PC-3 (cell line): ENCODE measurements at regions of chr5 and their contacts with region 1.

Region 1: GRCh38 chr5:127313847-127314473 is 23.4 kb downstream of the MEGF10 start:
- DNase-seq: peak; percentile 71
- ATAC-seq: peak; percentile 80
- H3K4me3 ChIP-seq: no peak overlapping the region
- H3K27ac ChIP-seq: no peak overlapping the region
- H3K4me1 ChIP-seq: no peaks in the 10 kb centered on the region
- H3K27me3 ChIP-seq: peaks cover 51% of the 10 kb centered on the region
- CTCF ChIP-seq: peak; percentile 89

Region 2: DNA sequence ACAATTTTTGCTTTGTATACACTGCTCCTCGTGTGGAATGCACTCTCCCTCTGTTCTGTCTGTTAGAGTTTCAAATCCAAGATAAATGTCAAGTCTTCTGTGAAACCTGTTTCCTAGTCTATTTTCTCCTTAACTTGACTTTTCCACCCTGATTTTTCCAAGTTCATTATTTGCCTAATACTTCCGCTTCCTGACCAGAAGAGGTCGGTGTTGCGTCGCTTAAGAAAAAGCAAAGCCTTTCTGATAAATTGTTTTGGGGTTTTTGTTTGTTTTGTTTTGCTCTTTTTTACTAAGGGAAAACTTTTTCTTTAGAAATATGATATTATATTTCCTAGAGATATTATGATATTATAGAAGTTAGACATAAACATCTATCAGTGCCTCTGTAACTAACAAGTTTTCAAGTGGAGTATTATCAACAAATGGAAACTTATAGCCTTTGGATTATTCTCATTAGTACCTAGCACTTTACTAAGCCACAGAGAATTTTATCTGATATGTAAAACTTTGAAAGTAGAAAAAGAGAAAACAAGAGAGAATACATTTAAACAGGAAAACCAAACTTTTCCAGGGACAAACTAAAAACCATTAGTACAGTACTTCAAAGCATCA is 657.5 kb before region 1 on chr5:
- CTCF ChIA-PET with region 1: no interaction called
- POLR2A ChIA-PET with region 1: no interaction called
- intact Hi-C with region 1: loop called (anchors 5 kb)
- DNase-seq: peak; percentile 48
- ATAC-seq: no peak
- H3K4me3 ChIP-seq: no peak overlapping the region
- H3K27ac ChIP-seq: no peak overlapping the region
- H3K4me1 ChIP-seq: no peaks in the 10 kb centered on the region
- H3K27me3 ChIP-seq: no peaks in the 10 kb centered on the region
- CTCF ChIP-seq: peak; percentile 82

Region 3: DNA sequence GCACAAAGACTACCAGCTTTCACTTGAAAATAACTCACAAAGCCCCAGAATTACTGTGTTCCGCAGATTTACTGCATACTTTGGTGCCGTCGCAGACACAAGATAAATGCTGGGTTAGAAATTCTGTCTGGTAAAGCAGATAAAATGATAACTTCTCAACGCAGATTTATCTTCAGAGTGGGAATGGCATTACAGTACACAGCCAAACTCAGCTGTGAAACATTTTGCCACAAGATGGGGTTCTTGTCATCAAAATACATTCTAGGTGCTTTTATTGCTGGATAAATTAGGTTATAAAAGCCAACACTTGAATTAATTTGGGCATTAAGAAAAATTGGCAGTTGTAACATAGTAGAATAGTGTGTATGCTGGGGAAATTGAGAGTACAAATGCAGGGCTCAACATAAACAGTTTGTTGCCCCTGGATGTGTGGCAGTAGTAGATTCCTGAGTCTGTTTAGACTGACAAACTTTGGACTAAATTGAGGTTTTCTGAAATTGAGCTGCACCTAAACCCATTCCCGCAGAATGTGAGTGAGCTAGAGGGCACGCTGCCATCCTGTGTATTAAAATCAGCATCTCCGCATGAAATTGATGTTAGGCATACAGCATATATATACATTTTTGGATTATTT is 475.9 kb before region 1 on chr5:
- CTCF ChIA-PET with region 1: no interaction called
- POLR2A ChIA-PET with region 1: no interaction called
- intact Hi-C with region 1: loop called (anchors 1 kb)
- DNase-seq: no peak
- ATAC-seq: peak; percentile 15; the same call in 1 of the 2 replicates
- H3K4me3 ChIP-seq: no peak overlapping the region
- H3K27ac ChIP-seq: no peak overlapping the region
- H3K4me1 ChIP-seq: no peaks in the 10 kb centered on the region
- H3K27me3 ChIP-seq: no peaks in the 10 kb centered on the region
- CTCF ChIP-seq: peak; percentile 31

Region 4: GRCh38 chr5:127290019-127290945 is 23.7 kb before region 1 on chr5 and contains the start of gene MEGF10:
- CTCF ChIA-PET with region 1: interaction called, 3 read pairs
- POLR2A ChIA-PET with region 1: no interaction called
- intact Hi-C with region 1: loop called (anchors 2 kb)
- DNase-seq: peak; percentile 46
- ATAC-seq: peak; percentile 83
- H3K4me3 ChIP-seq: no peak within 1 kb of the TSS
- H3K27ac ChIP-seq: no peak within 1 kb of the TSS
- H3K4me1 ChIP-seq: no peaks in the 10 kb centered on the region
- H3K27me3 ChIP-seq: peaks cover 51% of the 10 kb centered on the region
- CTCF ChIP-seq: peak; percentile 81
- total RNA-seq, gene MEGF10: not detected in 2 replicates